B cell (primary cell): ENCODE measurements at regions of chr10 and their contacts with region 1.

Region 1: GRCh38 chr10:61140765-61141392 is 196.9 kb upstream of the RHOBTB1 start:
- DNase-seq: peak; percentile 63
- ATAC-seq: peak; percentile 33
- H3K4me3 ChIP-seq: no peak overlapping the region
- H3K4me3 Mint-ChIP-seq: no peak overlapping the region
- H3K27ac ChIP-seq: no peak overlapping the region
- H3K27ac Mint-ChIP-seq: no peak overlapping the region
- H3K4me1 ChIP-seq: peaks cover 17 to 18% of the 10 kb centered on the region in 2 donors
- H3K4me1 Mint-ChIP-seq: peaks cover 25% of the 10 kb centered on the region
- H3K27me3 ChIP-seq: no peaks in the 10 kb centered on the region
- H3K27me3 Mint-ChIP-seq: peaks cover 4% of the 10 kb centered on the region
- CTCF ChIP-seq: peak; percentile 84

Region 2: DNA sequence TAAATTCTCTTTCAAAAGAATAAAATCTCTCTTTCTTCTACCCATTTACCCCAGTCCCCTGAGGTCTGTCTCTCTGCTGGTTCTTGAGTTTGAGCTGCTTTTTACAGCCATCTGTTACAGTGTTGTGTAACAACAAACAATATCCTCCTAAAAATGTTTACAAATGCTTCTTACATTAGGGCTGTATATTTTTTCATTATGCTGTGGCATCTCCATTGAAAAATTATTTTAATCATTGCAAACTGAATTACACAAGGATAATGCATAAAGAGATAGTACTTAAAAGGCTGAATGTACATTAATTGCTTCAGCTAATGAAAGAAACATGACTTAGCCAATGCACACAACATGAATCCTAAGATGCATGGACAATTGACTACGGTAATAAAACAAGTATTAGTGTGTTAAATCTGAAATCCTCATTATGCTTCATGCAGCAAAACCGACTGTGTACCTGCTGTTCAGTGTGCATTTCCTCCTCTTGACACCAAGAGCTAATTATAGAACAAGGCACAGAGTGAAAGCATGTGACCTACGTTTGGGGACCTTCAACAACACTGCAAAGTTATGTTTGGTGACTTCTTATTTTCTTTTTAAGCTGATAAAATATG is 15.2 kb before region 1 on chr10:
- CTCF ChIA-PET with region 1: interaction called, 26 read pairs
- POLR2A ChIA-PET with region 1: no interaction called
- intact Hi-C with region 1: loop called (anchors 2 kb)
- DNase-seq: peak; percentile 57
- ATAC-seq: peak; percentile 79
- H3K4me3 ChIP-seq: peak overlapping the region in 1 of 5 experiments; percentile 52
- H3K4me3 Mint-ChIP-seq: peak overlapping the region; percentile 59
- H3K27ac ChIP-seq: peak overlapping the region; percentile 21 to 59
- H3K27ac Mint-ChIP-seq: peak overlapping the region; percentile 72
- H3K4me1 ChIP-seq: peaks cover 36 to 43% of the 10 kb centered on the region in 2 donors
- H3K4me1 Mint-ChIP-seq: peaks cover 45% of the 10 kb centered on the region
- H3K27me3 ChIP-seq: no peaks in the 10 kb centered on the region
- H3K27me3 Mint-ChIP-seq: no peaks in the 10 kb centered on the region
- CTCF ChIP-seq: no peak

Region 3: GRCh38 chr10:61153771-61154170 is 12.9 kb after region 1 on chr10:
- CTCF ChIA-PET with region 1: interaction called, 15 read pairs
- POLR2A ChIA-PET with region 1: no interaction called
- intact Hi-C with region 1: no loop called
- DNase-seq: no peak
- ATAC-seq: no peak
- H3K4me3 ChIP-seq: no peak overlapping the region
- H3K4me3 Mint-ChIP-seq: no peak overlapping the region
- H3K27ac ChIP-seq: no peak overlapping the region
- H3K27ac Mint-ChIP-seq: no peak overlapping the region
- H3K4me1 ChIP-seq: no peaks in the 10 kb centered on the region
- H3K4me1 Mint-ChIP-seq: no peaks in the 10 kb centered on the region
- H3K27me3 ChIP-seq: no peaks in the 10 kb centered on the region
- H3K27me3 Mint-ChIP-seq: peaks cover 6% of the 10 kb centered on the region
- CTCF ChIP-seq: no peak

Region 4: DNA sequence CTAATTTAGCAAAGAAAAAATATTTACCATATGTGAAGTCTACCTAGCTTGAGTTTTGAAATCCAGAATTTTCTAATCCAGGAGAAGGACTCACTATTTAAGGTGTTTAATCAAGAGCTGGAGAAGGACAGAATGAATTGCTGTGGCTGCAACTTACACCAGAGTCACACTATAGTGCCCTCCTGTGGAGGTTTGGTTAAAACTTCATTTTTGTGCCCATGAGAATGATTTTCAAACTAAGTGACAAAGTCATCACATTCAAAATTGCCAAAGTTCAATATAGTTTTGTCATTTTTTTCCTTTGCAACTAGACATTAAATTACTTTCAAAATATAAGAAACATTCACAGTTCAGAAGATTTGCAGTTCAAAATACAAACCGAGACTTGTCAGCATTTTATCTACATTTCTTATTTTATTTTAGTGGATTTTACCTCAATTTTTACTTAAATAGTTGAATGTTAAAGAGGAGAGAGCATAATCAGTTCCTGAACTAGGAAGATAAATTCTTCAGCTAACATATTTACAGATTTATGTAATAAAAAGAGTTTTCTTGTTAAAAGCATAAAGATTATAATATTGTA is 592.6 kb after region 1 on chr10:
- CTCF ChIA-PET with region 1: interaction called, 8 read pairs
- POLR2A ChIA-PET with region 1: no interaction called
- intact Hi-C with region 1: loop called (anchors 1 kb)
- DNase-seq: peak; percentile 41
- ATAC-seq: no peak
- H3K4me3 ChIP-seq: no peak overlapping the region
- H3K4me3 Mint-ChIP-seq: no peak overlapping the region
- H3K27ac ChIP-seq: no peak overlapping the region
- H3K27ac Mint-ChIP-seq: no peak overlapping the region
- H3K4me1 ChIP-seq: no peaks in the 10 kb centered on the region
- H3K4me1 Mint-ChIP-seq: no peaks in the 10 kb centered on the region
- H3K27me3 ChIP-seq: no peaks in the 10 kb centered on the region
- H3K27me3 Mint-ChIP-seq: peaks cover 67% of the 10 kb centered on the region
- CTCF ChIP-seq: peak; percentile 74